ENCODE measurements at regions of chr3 and their contacts with region 1.

Region 1: DNA sequence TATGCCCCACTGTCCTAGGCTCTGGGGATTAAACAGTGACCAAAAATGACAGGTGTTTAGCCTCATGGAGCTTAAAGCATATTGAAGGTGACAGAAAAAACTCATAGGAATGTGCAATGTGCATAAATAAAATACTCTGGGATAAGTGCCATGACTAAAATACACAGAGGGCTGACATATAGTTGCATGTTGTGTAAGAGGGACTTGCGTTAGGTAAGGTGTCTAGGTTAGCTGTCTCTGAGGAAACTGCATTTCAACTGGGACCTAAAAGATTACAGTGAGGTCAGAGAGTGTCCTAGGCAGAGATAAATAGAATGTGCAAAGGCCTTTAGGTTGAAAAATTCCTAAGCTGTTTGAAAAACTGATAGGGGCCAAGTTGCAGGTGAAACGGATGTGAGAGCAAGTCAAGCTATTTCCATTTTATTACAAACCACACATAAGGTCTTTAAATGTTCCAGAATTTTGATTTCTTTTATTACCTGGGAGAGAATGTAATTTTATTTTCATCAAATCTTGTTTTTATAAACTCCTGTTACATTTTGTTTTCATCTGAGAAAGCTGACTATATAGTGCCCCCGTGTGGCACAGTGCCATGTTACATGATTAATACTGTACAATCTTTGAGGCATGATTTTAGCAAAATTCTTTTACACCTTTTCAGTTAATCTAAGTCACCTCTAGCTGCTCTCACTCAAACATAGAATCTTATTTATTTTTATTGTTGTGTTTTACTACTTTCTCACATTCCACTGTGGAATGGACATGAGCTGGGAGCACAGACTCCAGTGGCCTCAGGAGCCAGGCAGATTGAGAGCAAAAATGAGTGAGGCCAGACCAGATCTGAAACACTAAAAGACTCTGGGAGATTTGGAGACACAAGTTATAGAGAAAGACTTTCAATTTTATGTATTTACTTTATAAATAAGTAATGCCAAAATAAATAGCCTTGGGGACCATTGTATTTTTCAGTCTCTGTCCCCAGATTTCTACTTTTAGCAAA is 259.6 kb upstream of the ZNF717 start:
- DNase-seq: peak; percentile 44
- ATAC-seq: peak; percentile 61
- H3K4me3 ChIP-seq: no peak overlapping the region
- H3K27ac ChIP-seq: peak overlapping the region; percentile 20; the same call in 1 of the 2 replicates
- H3K4me1 ChIP-seq: peaks cover 8% of the 10 kb centered on the region
- H3K27me3 ChIP-seq: no peaks in the 10 kb centered on the region
- CTCF ChIP-seq: peak; percentile 65
- POLR2A ChIP-seq: no peak
- RAD21 ChIP-seq: peak; percentile 62

Region 2: GRCh38 chr3:75814797-75815196 is 230.1 kb before region 1 on chr3:
- CTCF ChIA-PET with region 1: no interaction called
- POLR2A ChIA-PET with region 1: no interaction called
- dilution Hi-C with region 1: no loop called
- in situ Hi-C with region 1: no loop called
- intact Hi-C with region 1: loop called (anchors 2 kb)
- DNase-seq: no peak
- ATAC-seq: no peak
- H3K4me3 ChIP-seq: no peak overlapping the region
- H3K27ac ChIP-seq: no peak overlapping the region
- H3K4me1 ChIP-seq: peaks cover 5% of the 10 kb centered on the region
- H3K27me3 ChIP-seq: no peaks in the 10 kb centered on the region
- CTCF ChIP-seq: no peak
- POLR2A ChIP-seq: no peak
- RAD21 ChIP-seq: no peak

Region 3: GRCh38 chr3:76024640-76025039 is 20.3 kb before region 1 on chr3:
- CTCF ChIA-PET with region 1: interaction called, 6 read pairs
- POLR2A ChIA-PET with region 1: no interaction called
- dilution Hi-C with region 1: no loop called
- in situ Hi-C with region 1: no loop called
- intact Hi-C with region 1: loop called (anchors 2 kb)
- DNase-seq: peak; percentile 59
- ATAC-seq: peak; percentile 58; the same call in 1 of the 2 replicates
- H3K4me3 ChIP-seq: no peak overlapping the region
- H3K27ac ChIP-seq: no peak overlapping the region
- H3K4me1 ChIP-seq: peaks cover 7% of the 10 kb centered on the region
- H3K27me3 ChIP-seq: no peaks in the 10 kb centered on the region
- CTCF ChIP-seq: peak; percentile 63
- POLR2A ChIP-seq: no peak
- RAD21 ChIP-seq: peak; percentile 70

Region 4: GRCh38 chr3:76063019-76063418 is 18.1 kb after region 1 on chr3:
- CTCF ChIA-PET with region 1: interaction called, 11 read pairs
- POLR2A ChIA-PET with region 1: no interaction called
- dilution Hi-C with region 1: no loop called
- in situ Hi-C with region 1: no loop called
- intact Hi-C with region 1: no loop called
- DNase-seq: peak; percentile 82
- ATAC-seq: peak; percentile 72
- H3K4me3 ChIP-seq: no peak overlapping the region
- H3K27ac ChIP-seq: no peak overlapping the region
- H3K4me1 ChIP-seq: 0 out of 2 replicates have a peak, but pooled peaks cover 2% of the 10 kb centered on the region
- H3K27me3 ChIP-seq: no peaks in the 10 kb centered on the region
- CTCF ChIP-seq: no peak
- POLR2A ChIP-seq: no peak
- RAD21 ChIP-seq: no peak

Region 5: DNA sequence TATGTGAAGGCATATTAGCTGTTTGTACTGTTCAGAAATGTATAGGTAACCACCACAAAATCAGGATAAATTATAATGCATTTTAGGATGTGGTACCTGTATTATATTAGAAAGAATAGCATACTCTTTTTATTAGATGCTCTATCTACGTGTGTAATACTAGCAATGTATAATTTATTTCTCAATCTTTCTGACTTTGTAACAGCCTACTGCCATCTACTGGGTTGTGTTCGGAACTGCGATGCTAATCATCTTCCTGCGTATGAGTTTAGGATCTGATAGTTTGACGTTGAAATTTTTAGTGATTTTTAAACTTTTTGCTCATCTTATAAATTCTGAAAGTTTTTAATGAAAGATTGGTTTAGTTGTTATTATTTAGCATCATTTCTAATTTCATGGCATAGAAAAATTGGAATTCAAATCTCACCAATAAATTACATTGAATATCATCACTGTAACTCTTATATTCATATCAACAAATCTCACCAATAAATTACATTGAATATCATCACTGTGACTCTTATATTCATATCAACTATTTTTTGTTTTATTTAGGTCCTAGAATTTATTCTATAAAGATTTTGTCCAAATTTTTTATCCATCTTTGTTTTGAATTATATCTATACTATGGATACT is 63.2 kb after region 1 on chr3:
- CTCF ChIA-PET with region 1: interaction called, 3 read pairs
- POLR2A ChIA-PET with region 1: no interaction called
- dilution Hi-C with region 1: no loop called
- in situ Hi-C with region 1: no loop called
- intact Hi-C with region 1: loop called (anchors 5 kb)
- DNase-seq: peak; percentile 61
- ATAC-seq: peak; percentile 91
- H3K4me3 ChIP-seq: no peak overlapping the region
- H3K27ac ChIP-seq: no peak overlapping the region
- H3K4me1 ChIP-seq: no peaks in the 10 kb centered on the region
- H3K27me3 ChIP-seq: no peaks in the 10 kb centered on the region
- CTCF ChIP-seq: peak; percentile 86
- POLR2A ChIP-seq: no peak
- RAD21 ChIP-seq: peak; percentile 76

Region 6: GRCh38 chr3:76308541-76308940 is 263.6 kb after region 1 on chr3:
- CTCF ChIA-PET with region 1: no interaction called
- POLR2A ChIA-PET with region 1: no interaction called
- dilution Hi-C with region 1: no loop called
- in situ Hi-C with region 1: no loop called
- intact Hi-C with region 1: loop called (anchors 5 kb)
- DNase-seq: peak; percentile 85
- ATAC-seq: peak; percentile 43
- H3K4me3 ChIP-seq: no peak overlapping the region
- H3K27ac ChIP-seq: peak overlapping the region; percentile 79; the same call in 1 of the 2 replicates
- H3K4me1 ChIP-seq: peaks cover 9% of the 10 kb centered on the region
- H3K27me3 ChIP-seq: no peaks in the 10 kb centered on the region
- CTCF ChIP-seq: no peak
- POLR2A ChIP-seq: no peak
- RAD21 ChIP-seq: no peak

Region 7: GRCh38 chr3:76554707-76555106 is 509.8 kb after region 1 on chr3:
- CTCF ChIA-PET with region 1: no interaction called
- POLR2A ChIA-PET with region 1: no interaction called
- dilution Hi-C with region 1: no loop called
- in situ Hi-C with region 1: no loop called
- intact Hi-C with region 1: no loop called
- DNase-seq: peak; percentile 65
- ATAC-seq: no peak
- H3K4me3 ChIP-seq: no peak overlapping the region
- H3K27ac ChIP-seq: no peak overlapping the region
- H3K4me1 ChIP-seq: no peaks in the 10 kb centered on the region
- H3K27me3 ChIP-seq: no peaks in the 10 kb centered on the region
- CTCF ChIP-seq: no peak
- POLR2A ChIP-seq: no peak
- RAD21 ChIP-seq: no peak